H1 (cell line): ENCODE measurements at regions of chr4 and their contacts with region 1.

Region 1: DNA sequence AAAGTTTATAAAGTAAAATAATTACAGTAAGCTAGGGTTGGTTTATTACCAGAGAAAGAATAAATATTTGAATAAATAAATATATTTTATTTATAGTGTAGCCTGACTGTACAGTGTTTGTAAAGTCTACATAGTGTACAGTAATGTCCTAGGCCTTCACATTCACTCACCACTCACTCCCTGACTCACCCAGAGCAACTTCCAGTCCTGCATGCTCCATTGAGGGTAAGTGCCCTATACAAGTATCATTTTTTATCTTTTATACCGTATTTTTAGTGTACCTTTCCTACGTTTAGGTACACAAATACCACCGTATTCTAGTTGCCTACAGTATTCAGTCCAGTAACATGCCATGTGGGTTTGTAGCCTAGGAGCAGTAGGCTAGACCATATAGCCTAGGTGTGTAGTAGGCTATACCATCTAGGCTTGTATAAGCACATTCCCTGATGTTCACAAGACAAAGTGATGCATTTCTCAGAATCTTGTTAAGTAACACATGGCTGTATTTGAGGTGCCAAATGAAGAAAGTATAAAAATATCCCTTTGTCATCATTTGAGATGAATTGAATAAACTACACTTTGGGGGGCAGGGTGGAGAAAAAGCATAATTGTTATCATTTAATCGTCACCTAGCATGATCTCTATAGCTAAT is 14.7 kb upstream of the KLHL8 start:
- DNase-seq: no peak
- H3K4me3 ChIP-seq: peak overlapping the region in 1 of 4 experiments; percentile 48; a peak in 1 of 8 replicates
- H3K27ac ChIP-seq: no peak overlapping the region
- H3K4me1 ChIP-seq: no peaks in the 10 kb centered on the region
- H3K27me3 ChIP-seq: peaks cover 0 to 1% (median 0%) of the 10 kb centered on the region in 4 experiments; a peak in 1 of 7 replicates
- CTCF ChIP-seq: no peak
- EP300 ChIP-seq: no peak
- POLR2A ChIP-seq: no peak
- RAD21 ChIP-seq: no peak

Region 2: DNA sequence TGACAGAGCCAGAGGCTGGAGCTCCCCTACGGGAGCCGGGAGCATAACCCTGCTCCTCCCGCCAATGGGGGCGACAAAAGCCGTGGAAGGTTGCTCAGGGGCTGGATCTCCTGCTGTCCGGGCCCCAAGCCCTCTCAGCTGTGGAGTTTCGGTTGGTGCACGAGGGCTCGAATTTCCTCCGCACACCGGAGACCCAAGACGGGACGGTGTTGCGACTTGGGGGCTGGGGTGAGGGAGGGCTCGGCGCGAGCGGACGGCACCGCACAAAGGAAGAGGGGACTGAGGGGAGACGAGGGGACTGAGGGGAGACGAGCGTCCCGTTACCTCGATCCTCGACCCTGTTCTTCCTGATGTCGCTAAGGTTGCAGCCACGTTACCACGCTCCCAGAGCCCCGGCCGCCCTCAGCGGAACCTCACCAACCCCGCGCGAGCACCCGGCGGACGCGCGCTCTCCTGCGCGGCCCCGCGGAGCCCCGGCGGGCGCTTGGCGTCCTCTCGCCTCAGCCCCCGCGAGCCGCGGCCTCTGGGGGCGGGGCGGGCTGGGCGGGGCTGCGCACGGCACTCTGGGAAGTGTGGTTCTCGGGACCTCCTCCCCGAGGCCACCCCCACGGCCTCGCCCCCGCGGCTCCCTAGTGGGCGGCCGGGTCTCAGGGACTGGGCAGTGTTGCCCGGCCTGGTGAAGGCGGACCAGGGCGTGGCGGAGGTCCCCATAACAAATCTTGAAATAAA is 14.9 kb before region 1 on chr4 and contains the start of gene KLHL8:
- CTCF ChIA-PET with region 1: interaction called, 10 read pairs
- POLR2A ChIA-PET with region 1: interaction called, 3 read pairs
- DNase-seq: peak; percentile 39 to 92
- H3K4me3 ChIP-seq: peak within 1 kb of the TSS; percentile 87 to 100 (median 98)
- H3K27ac ChIP-seq: peak within 1 kb of the TSS; percentile 93
- H3K4me1 ChIP-seq: peaks cover 0 to 2% (median under 1%) of the 10 kb centered on the region in 4 experiments; a peak in 3 of 7 replicates
- H3K27me3 ChIP-seq: no peaks in the 10 kb centered on the region
- CTCF ChIP-seq: no peak
- EP300 ChIP-seq: peak in 1 of 2 experiments; percentile 31; a peak in 1 of 3 replicates
- POLR2A ChIP-seq: peak; percentile 88 to 94
- RAD21 ChIP-seq: no peak
- total RNA-seq, gene KLHL8: 6.9 and 8.1 TPM in 2 replicates